Panc1 (cell line): ENCODE measurements at regions of chr12 and their contacts with region 1.

Region 1: GRCh38 chr12:132761032-132761920 is at the start of gene ANKLE2:
- DNase-seq: no peak
- ATAC-seq: peak; percentile 74
- H3K4me3 ChIP-seq: peak within 1 kb of the TSS; percentile 96 to 98
- H3K27ac ChIP-seq: peak within 1 kb of the TSS; percentile 93
- H3K4me1 ChIP-seq: no peaks in the 10 kb centered on the region; the same call in 1 of the 2 replicates
- H3K27me3 ChIP-seq: no peaks in the 10 kb centered on the region
- CTCF ChIP-seq: no peak
- total RNA-seq, gene ANKLE2: 88.7 TPM

Region 2: DNA sequence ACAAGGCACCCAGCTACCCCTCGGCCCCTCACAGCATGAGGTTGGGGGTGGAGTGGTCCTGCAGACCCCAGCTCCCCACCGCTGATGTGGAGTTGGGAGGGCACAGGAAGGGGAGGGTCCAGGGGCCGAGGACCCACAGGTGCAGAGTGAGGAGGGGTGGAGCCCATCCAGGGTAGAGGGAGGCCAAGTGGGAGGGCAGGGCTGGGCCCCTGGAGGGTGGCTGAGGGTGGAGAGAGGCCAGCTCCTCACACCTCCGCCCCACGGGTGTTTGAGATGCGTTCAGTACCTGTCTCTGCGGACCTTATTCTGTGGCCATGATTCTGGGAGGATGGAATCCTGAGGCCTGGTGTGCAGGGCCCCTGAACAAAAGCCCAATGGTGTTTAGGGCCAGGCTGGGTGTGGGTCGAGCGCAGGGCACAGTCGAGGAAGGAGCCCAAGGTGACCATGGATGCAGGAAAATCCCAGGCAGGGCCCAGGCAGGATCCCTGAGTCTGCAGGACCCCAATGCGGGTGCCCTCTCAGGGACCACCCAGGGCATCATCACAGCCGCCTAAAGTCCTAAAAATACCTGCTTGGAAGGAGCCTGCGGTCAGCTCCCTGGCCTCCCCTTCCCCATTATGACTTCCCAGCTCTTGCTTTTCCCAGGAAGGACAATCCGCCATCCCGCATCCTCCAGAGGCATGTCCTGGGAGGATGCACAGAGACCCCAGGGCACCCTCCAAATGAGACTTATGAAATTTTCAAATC is 1427.5 kb before region 1 on chr12:
- CTCF ChIA-PET with region 1: no interaction called
- POLR2A ChIA-PET with region 1: no interaction called
- in situ Hi-C with region 1: no loop called
- intact Hi-C with region 1: no loop called
- DNase-seq: no peak
- ATAC-seq: no peak
- H3K4me3 ChIP-seq: no peak overlapping the region
- H3K27ac ChIP-seq: no peak overlapping the region
- H3K4me1 ChIP-seq: no peaks in the 10 kb centered on the region
- H3K27me3 ChIP-seq: no peaks in the 10 kb centered on the region
- CTCF ChIP-seq: no peak

Region 3: DNA sequence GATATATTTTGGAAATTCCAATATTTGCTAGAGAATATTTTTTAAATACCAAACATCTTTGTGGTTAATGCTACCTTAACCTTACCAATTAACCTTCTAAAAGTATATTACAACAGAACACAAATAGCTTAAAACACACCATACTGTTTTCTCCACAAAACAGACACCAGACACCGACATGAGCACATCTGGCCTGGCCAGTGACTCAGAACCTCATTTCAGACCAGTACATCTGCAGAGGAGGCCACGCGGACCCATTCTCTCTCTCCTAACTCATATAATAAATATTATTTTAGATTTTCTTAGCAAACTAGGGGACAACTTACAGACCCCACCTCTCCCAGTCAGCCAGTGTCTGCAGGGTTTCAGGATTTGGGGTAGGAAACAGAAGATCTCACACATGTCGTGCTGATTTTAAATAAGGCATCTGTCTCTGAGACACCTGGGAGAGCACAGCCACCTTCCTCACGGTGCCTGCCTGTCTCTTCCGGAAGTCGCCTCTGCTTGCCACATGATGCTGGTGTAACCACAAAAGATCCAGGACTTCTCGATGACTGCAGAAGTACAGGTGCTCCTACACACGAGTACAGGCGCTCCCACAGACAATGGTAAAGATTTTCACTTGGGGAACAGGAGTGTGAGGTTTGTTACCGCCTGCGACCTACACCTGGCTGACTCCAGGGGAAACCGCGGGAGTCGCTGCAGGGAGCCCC is 10.0 kb after region 1 on chr12:
- CTCF ChIA-PET with region 1: no interaction called
- POLR2A ChIA-PET with region 1: interaction called, 15 read pairs
- in situ Hi-C with region 1: no loop called
- intact Hi-C with region 1: no loop called
- DNase-seq: no peak
- ATAC-seq: no peak
- H3K4me3 ChIP-seq: no peak overlapping the region
- H3K27ac ChIP-seq: no peak overlapping the region
- H3K4me1 ChIP-seq: no peaks in the 10 kb centered on the region
- H3K27me3 ChIP-seq: no peaks in the 10 kb centered on the region
- CTCF ChIP-seq: no peak

Region 4: DNA sequence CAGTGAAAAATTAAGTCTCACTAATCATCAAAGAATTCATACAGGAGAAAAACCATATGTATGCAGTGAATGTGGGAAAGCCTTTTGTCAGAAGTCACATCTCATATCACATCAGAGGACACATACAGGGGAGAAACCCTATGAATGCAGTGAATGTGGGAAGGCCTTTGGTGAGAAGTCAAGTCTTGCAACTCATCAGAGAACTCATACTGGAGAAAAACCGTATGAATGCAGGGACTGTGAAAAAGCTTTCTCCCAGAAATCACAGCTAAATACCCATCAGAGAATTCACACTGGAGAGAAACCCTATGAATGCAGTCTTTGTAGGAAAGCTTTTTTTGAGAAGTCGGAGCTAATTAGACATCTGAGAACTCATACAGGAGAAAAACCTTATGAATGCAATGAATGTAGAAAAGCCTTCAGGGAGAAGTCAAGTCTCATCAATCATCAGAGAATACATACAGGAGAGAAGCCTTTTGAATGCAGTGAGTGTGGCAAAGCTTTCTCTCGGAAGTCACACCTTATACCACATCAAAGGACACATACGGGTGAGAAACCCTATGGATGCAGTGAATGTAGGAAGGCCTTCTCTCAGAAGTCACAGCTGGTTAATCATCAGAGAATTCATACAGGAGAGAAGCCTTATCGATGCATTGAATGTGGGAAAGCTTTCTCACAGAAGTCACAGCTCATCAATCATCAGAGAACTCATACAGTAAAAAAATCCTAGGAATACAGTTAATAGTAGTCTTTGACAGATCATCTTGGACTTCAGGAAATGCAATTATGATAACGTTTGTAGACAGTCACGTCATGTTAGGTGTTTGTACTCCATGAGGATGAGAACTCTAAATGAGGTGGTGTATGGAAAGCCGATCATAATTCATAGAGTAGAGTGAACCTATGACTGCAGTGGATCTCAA is 297.2 kb after region 1 on chr12:
- CTCF ChIA-PET with region 1: no interaction called
- POLR2A ChIA-PET with region 1: interaction called, 11 read pairs
- in situ Hi-C with region 1: no loop called
- intact Hi-C with region 1: no loop called
- DNase-seq: no peak
- ATAC-seq: no peak
- H3K4me3 ChIP-seq: no peak overlapping the region
- H3K27ac ChIP-seq: no peak overlapping the region
- H3K4me1 ChIP-seq: no peaks in the 10 kb centered on the region
- H3K27me3 ChIP-seq: no peaks in the 10 kb centered on the region
- CTCF ChIP-seq: no peak